ENCODE measurements at regions of chr4 and their contacts with region 1.

Region 1: GRCh38 chr4:183074296-183074990 is 24.6 kb upstream of the WWC2 start:
- H3K4me3 ChIP-seq: no peak overlapping the region
- H3K27ac ChIP-seq: no peak overlapping the region
- H3K4me1 ChIP-seq: no peaks in the 10 kb centered on the region
- CTCF ChIP-seq: no peak

Region 2: DNA sequence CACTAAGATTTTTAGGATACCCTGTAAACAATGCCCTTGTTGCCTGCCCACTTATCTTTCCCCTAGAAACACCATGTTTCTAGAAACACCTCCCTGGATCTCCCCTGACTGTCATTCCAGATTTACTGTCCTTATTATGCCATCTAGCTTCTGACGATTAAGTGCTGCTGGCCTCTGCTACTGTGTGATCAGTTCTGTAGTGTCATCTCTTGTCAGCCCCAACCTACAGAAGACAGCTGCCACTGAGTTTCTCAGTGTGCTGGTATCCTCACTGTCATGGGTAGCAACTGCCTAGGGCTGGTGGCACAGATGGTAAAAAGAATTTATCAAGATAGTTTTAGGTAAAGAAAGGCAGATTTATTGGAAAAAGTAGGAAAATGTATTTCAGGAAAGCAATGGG is 44.1 kb before region 1 on chr4:
- CTCF ChIA-PET with region 1: no interaction called
- POLR2A ChIA-PET with region 1: no interaction called
- H3K4me3 ChIP-seq: no peak overlapping the region
- H3K27ac ChIP-seq: no peak overlapping the region
- H3K4me1 ChIP-seq: no peaks in the 10 kb centered on the region
- CTCF ChIP-seq: no peak

Region 3: GRCh38 chr4:183249857-183250256 is 175.4 kb after region 1 on chr4:
- CTCF ChIA-PET with region 1: interaction called, 74 read pairs
- POLR2A ChIA-PET with region 1: interaction called, 4 read pairs
- H3K4me3 ChIP-seq: no peak overlapping the region
- H3K27ac ChIP-seq: no peak overlapping the region
- H3K4me1 ChIP-seq: peaks cover 6% of the 10 kb centered on the region
- CTCF ChIP-seq: peak; percentile 30; the same call in 1 of the 2 replicates

Region 4: DNA sequence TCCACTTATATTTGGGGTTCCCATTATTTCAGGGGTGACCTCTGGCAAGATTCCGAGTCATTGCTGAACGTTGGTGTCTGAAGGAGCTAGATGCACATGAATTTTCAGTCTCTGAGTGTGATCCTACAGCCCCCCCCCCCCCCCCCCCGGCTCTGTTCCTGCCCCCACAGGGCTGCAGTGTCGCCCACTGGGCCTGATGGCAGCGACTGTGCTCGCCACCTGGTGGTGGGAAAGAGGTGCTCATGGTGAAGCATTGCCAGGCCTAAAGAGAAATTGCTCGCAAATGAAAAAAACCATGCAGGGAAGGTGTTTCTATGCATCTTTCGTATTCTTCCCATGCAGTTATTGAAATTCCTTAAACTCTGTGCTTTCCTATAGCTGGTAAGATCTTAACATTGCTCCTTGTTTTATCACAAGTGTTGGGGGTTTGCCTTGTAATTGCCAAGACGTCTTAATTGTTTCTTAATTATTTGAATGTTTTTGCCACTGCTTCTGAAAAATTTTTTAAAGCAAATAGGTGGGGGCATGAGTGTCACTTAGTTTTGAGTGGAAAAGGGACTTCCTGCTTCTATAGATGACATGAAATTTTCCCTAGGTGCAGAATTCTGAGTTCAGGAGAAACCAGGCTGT is 182.4 kb after region 1 on chr4:
- CTCF ChIA-PET with region 1: interaction called, 74 read pairs
- POLR2A ChIA-PET with region 1: no interaction called
- H3K4me3 ChIP-seq: no peak overlapping the region
- H3K27ac ChIP-seq: no peak overlapping the region
- H3K4me1 ChIP-seq: no peaks in the 10 kb centered on the region
- CTCF ChIP-seq: peak; percentile 34; the same call in 1 of the 2 replicates

Measured in HEK293 (cell line).